Heart left ventricle (tissue), 16 donors: ENCODE measurements at regions of chr12 and their contacts with region 1.

Region 1: GRCh38 chr12:89162704-89163261 is 189.5 kb downstream of the DUSP6 start:
- DNase-seq: peak; percentile 42 to 73 (median 53)
- ATAC-seq: peak; percentile 51 to 91 (median 87)
- H3K4me3 ChIP-seq: no peak overlapping the region
- H3K27ac ChIP-seq: peak overlapping the region; percentile 1 to 90 (median 64)
- H3K4me1 ChIP-seq: peaks cover 0 to 88% (median 22%) of the 10 kb centered on the region in 12 donors
- H3K27me3 ChIP-seq: no peaks in the 10 kb centered on the region
- CTCF ChIP-seq: no peak
- POLR2A ChIP-seq: no peak

Region 2: DNA sequence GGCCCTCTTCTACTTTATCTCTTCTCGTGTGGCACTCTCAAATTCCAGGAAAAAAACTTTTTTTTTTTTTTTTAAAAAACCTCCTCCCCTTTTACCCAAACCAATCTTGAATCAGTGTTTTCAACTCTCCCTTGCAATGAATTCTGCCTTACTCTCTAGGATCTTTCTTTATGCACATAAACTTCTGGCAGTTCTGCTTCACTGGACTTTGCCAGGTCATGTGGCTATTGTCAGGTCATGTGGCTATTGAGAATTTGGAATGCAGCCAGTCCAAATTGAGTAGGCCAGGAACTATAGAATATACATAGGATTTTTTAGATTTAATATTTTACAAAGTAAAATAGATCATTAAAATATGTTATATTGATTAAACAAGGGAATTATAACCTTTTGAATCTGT is 802.4 kb before region 1 on chr12:
- intact Hi-C with region 1: no loop called
- DNase-seq: no peak
- ATAC-seq: no peak
- H3K4me3 ChIP-seq: no peak overlapping the region
- H3K27ac ChIP-seq: no peak overlapping the region
- H3K4me1 ChIP-seq: peaks cover 0 to 5% (median 0%) of the 10 kb centered on the region in 12 donors
- H3K27me3 ChIP-seq: no peaks in the 10 kb centered on the region
- CTCF ChIP-seq: no peak
- POLR2A ChIP-seq: no peak

Region 3: DNA sequence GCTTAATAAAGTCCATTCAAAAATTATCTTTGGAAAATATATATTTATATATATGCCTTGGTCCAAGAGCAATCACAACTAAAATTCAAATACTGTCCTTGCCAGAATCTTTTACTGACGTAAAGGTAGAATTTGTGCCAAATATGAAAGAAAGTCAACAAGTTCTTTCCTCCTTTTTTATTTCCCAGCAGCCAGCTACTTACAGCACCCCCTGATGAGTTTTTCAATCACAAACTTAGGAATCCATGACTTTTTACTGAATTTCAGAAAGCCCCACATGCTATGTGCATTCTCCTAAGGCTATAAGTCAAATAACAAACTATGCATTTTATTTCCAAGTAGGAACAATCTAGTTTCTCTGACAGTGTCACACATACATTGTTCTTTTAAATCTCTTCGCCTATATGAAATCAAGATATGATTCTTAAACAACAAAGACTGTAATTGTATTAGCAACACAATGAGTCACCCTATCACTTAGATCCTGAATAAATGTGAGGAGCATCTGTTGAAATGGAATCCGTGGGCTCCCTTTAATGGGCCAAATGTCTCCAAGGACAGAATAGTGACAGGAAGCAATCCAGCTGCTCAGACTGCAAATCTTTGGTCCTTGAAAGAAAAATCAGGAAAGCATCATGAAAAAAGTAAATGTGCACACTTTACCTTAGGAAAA is 81.9 kb before region 1 on chr12:
- intact Hi-C with region 1: loop called in 1 of 10 experiments (anchors 5 kb)
- DNase-seq: no peak
- ATAC-seq: peak in 2 of 4 donors; percentile 47 to 65
- H3K4me3 ChIP-seq: no peak overlapping the region
- H3K27ac ChIP-seq: peak overlapping the region in 3 of 12 donors; percentile 4 to 44 (median 17)
- H3K4me1 ChIP-seq: peaks cover 0 to 40% (median 16%) of the 10 kb centered on the region in 12 donors
- H3K27me3 ChIP-seq: no peaks in the 10 kb centered on the region
- CTCF ChIP-seq: no peak
- POLR2A ChIP-seq: no peak

Region 4: DNA sequence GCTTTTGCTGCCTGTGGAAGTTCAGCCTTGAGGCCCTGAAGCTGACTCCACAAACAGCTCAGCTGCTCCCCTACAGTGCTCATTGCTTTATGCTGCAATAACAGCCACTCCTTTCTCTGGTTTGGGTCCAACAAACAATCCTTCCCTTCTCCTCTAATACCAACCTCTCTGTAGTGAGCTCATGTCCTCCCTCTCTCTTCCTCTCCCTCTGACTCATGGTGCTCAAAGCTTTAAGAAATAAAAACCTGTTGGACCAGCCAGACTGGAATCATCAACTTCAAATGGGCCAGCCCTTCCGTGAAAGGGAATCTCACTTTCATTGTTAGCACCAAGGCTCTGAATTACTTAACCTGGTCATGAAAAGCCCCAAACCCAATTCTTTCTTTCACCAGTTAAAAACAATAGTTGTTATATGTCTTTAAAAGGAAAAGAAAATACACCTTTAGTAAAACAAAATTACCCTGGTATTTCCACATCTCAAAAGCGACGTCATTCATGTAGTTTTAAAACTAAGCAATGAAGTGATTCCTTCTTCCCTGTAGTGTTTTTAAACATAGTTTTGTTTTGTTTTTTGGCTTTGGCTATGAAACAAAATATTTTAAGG is 63.1 kb after region 1 on chr12:
- intact Hi-C with region 1: loop called in 1 of 10 experiments (anchors 2 kb)
- DNase-seq: peak in 2 of 5 donors; percentile 9 to 38
- ATAC-seq: peak in 3 of 4 donors; percentile 74 to 98 (median 96)
- H3K4me3 ChIP-seq: no peak overlapping the region
- H3K27ac ChIP-seq: peak overlapping the region in 2 of 12 donors; percentile 54 to 69
- H3K4me1 ChIP-seq: peaks cover 0 to 19% (median 3%) of the 10 kb centered on the region in 12 donors
- H3K27me3 ChIP-seq: no peaks in the 10 kb centered on the region
- CTCF ChIP-seq: no peak
- POLR2A ChIP-seq: no peak

Region 5: DNA sequence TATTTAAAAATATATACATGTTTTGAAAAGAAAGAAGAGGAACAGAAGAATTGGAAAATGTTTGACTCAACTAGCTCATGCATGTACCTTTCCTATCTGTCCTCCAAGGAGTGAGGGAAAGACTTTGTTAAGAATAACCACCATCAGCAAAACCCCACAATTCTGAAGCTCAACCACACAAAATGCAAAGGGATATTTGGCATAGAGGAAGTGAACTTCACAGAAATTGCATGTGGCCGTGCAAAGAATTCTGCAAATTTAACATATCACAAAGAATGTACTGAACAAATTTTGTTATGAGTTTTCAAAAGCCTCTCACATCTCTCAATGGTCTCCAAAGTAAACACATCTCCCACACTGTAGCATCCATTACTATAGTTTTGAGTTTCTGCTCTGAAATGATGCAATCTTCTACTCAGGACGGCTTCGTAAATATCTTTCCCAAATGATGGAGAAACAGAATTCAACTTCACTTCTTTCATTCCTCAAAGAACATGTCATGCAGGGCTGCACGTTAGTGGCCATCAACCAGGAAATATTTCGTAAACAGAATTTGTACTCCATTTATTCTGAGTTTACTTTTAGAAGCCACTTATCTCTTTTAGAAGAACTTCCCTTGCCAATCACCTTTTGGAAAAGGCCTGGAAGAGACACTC is 171.9 kb after region 1 on chr12:
- intact Hi-C with region 1: loop called in 2 of 10 experiments (anchors 5 kb)
- DNase-seq: no peak
- ATAC-seq: no peak
- H3K4me3 ChIP-seq: no peak overlapping the region
- H3K27ac ChIP-seq: peak overlapping the region in 4 of 12 donors; percentile 22 to 59 (median 34)
- H3K4me1 ChIP-seq: peaks cover 0 to 27% (median 8%) of the 10 kb centered on the region in 12 donors
- H3K27me3 ChIP-seq: no peaks in the 10 kb centered on the region
- CTCF ChIP-seq: no peak
- POLR2A ChIP-seq: no peak